ENCODE measurements at regions of chr7 and their contacts with region 1.

Region 1: DNA sequence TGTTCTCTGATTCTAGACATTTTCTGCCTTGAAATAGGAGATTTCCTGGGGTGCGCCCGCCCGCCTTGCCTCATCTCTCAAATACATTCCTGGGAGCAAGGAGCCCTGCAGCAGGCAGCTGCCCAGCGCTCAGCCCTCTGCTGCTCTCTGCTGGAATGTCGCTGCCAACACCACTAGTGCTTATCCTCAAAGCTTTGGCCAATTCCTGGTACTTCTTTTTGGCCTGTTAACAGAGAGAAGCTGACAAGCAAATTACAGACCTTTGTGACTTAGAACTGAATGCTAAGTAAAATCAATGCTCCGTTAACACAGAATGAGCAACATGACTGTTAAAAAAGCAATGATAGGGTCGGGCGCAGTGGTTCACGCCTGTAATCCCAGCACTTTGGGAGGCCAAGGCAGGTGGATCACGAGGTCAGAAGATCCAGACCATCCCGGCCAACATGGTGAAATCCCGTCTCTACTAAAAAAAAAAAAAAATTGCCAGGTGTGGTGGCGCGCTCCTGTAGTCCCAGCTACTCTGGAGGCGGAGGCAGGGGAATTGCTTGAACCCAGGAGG is 41.9 kb upstream of the SYPL1 start:
- DNase-seq: peak; percentile 79
- ATAC-seq: peak; percentile 98
- H3K4me3 Mint-ChIP-seq: no peak overlapping the region
- H3K27ac Mint-ChIP-seq: no peak overlapping the region
- H3K4me1 Mint-ChIP-seq: peaks cover 5% of the 10 kb centered on the region
- H3K27me3 Mint-ChIP-seq: peaks cover 15% of the 10 kb centered on the region
- CTCF ChIP-seq: peak; percentile 94

Region 2: DNA sequence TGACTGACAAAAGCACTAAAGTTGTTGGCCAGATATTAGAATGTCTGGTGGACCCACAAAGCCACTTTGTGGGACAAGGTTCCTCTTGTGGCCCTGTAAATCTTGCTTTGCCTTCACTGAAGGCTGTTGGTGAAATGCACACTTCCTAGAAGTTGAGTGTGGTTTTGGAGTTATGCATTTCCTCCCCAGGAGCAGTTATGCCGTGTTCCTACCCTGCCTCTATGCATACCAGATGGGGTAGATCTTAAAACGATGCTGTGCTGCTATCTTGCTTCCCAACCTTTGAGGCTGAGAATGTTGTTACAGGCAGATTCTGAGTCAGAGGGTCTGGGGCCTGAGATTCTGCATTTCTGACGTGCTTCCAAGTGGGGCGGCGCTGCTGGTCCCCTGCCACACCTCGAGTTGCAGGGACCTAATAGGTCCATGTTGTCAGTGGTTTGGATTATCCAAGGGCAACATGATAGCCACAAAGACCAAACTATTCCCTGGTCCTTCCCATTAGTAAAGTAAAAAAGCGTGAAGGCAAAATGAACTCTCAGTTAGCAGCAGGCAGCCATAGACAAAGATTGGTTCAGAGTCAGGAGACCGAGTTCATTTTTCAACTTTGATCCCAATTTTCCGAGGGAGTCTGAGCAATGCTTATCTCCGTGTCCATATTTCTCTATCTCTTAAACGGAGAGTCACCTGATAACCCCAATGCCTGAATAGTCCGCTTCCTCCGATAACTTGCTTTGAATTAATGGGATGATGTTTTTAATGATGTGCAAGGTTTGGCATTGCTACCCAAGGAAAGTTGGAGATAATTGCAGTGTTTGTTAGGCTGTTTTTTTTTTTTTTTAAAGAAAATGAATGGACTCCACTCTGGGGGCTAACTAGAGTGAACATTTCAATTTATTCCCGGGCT is 135.2 kb before region 1 on chr7:
- CTCF ChIA-PET with region 1: no interaction called
- POLR2A ChIA-PET with region 1: no interaction called
- intact Hi-C with region 1: no loop called
- DNase-seq: no peak
- ATAC-seq: no peak
- H3K4me3 Mint-ChIP-seq: no peak overlapping the region
- H3K27ac Mint-ChIP-seq: no peak overlapping the region
- H3K4me1 Mint-ChIP-seq: peaks cover 60% of the 10 kb centered on the region
- H3K27me3 Mint-ChIP-seq: no peaks in the 10 kb centered on the region
- CTCF ChIP-seq: no peak

Region 3: DNA sequence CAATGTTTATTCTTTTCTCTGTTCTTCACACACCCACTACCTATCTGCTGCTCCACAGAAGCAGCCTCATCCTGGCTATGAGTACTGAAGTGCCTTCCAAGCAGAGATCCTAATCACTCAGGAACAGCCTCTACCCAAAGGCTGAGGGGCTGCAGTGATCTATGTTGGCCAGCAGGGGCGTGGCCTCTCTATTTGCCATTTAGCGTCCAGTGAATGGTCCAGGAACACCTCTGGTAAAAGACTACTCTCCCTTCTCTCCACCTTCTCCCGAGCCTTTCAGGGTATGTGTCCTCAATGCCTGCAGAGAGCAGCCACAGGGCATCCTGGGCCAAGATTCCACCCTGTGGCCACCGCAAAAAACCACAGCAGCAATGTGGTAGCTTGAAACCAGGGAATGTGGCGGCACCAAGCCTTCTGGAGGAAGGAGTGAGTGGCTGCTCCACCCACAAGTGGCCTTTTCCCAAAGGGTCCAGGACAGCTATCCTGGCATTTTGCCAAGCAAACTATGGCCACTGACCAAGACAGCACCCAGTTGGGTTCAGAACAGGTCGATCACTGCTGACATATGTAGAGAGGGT is 112.7 kb before region 1 on chr7:
- CTCF ChIA-PET with region 1: interaction called, 34 read pairs
- POLR2A ChIA-PET with region 1: no interaction called
- intact Hi-C with region 1: no loop called
- DNase-seq: peak; percentile 50
- ATAC-seq: peak; percentile 59
- H3K4me3 Mint-ChIP-seq: no peak overlapping the region
- H3K27ac Mint-ChIP-seq: no peak overlapping the region
- H3K4me1 Mint-ChIP-seq: peaks cover 28% of the 10 kb centered on the region
- H3K27me3 Mint-ChIP-seq: no peaks in the 10 kb centered on the region
- CTCF ChIP-seq: peak; percentile 82

Region 4: GRCh38 chr7:106056513-106057203 is 97.3 kb before region 1 on chr7:
- CTCF ChIA-PET with region 1: interaction called, 195 read pairs
- POLR2A ChIA-PET with region 1: interaction called, 7 read pairs
- intact Hi-C with region 1: loop called (anchors 1 kb)
- DNase-seq: peak; percentile 83
- ATAC-seq: peak; percentile 97
- H3K4me3 Mint-ChIP-seq: no peak overlapping the region
- H3K27ac Mint-ChIP-seq: peak overlapping the region; percentile 34
- H3K4me1 Mint-ChIP-seq: peaks cover 25% of the 10 kb centered on the region
- H3K27me3 Mint-ChIP-seq: no peaks in the 10 kb centered on the region
- CTCF ChIP-seq: peak; percentile 87

Region 5: GRCh38 chr7:106086062-106086461 is 67.9 kb before region 1 on chr7:
- CTCF ChIA-PET with region 1: interaction called, 11 read pairs
- POLR2A ChIA-PET with region 1: no interaction called
- intact Hi-C with region 1: no loop called
- DNase-seq: peak; percentile 52
- ATAC-seq: peak; percentile 87
- H3K4me3 Mint-ChIP-seq: no peak overlapping the region
- H3K27ac Mint-ChIP-seq: no peak overlapping the region
- H3K4me1 Mint-ChIP-seq: peaks cover 22% of the 10 kb centered on the region
- H3K27me3 Mint-ChIP-seq: no peaks in the 10 kb centered on the region
- CTCF ChIP-seq: no peak

Region 6: DNA sequence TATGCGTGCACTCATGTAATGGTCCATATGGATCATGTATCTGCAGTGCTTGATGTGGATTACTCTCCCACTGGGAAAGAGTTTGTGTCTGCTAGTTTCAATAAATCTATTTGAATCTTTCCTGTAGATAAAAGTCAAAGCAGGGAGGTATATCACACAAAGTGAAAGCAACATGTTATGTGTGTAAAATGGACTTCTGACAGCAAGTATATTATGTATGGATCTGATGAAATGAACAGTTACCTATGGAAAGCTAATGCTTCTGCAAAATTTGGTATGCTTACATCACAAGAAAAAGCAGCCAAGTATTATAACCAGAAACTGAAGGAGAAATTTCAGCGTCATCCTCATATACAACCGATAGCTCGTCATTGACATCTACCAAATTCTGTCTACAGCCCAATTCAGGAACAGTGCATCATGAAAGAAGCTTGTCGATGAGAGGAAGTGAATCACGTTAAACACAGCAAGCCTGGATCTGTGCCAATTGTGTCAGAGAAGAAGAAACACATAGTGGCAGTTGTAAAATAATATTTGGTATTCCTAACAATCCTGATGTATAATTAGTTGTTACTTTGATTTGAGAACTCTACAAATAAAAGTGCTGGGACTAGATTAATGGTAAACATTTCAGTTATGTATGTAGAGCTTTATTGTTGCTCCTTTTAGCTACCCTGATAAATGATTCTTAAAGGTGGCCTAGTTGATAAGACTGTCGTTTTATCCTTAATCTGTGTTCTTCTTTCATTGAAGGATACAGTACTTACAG is 27.6 kb before region 1 on chr7:
- CTCF ChIA-PET with region 1: interaction called, 15 read pairs
- POLR2A ChIA-PET with region 1: no interaction called
- intact Hi-C with region 1: no loop called
- DNase-seq: peak; percentile 74
- ATAC-seq: peak; percentile 79
- H3K4me3 Mint-ChIP-seq: peak overlapping the region; percentile 56
- H3K27ac Mint-ChIP-seq: peak overlapping the region; percentile 17
- H3K4me1 Mint-ChIP-seq: peaks cover 14% of the 10 kb centered on the region
- H3K27me3 Mint-ChIP-seq: no peaks in the 10 kb centered on the region
- CTCF ChIP-seq: no peak

Region 7: DNA sequence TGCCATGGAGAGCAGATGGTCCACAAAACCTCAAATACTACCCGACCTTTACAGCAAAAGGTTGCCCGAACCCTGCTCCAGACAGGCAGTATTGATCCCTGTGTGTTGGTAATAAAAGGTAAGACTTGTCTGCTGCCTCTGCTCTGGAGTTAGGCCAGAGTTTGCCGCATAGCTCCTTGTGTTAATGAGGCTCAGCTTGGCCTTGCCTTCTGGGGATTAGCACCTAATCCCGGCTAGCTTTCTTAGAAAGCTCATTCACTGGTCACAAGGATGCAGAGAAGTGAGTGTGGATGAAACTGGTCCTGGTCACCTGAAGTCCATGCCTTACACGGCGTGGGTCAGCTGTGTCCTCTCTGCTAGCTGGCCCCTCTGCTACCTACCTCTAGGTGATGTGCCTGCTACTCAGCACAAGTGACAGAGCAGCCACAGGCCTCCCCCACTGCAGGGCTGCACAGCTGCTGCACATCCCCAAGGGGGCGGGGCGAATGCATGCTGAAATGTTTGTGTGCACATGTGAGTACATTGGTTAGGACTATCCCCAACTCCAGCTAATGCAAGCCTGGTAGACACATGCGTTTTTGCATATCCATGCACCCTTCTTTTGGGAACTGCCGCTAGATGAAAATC is 10.1 kb before region 1 on chr7:
- CTCF ChIA-PET with region 1: interaction called, 37 read pairs
- POLR2A ChIA-PET with region 1: no interaction called
- intact Hi-C with region 1: no loop called
- DNase-seq: peak; percentile 20
- ATAC-seq: no peak
- H3K4me3 Mint-ChIP-seq: no peak overlapping the region
- H3K27ac Mint-ChIP-seq: no peak overlapping the region
- H3K4me1 Mint-ChIP-seq: no peaks in the 10 kb centered on the region
- H3K27me3 Mint-ChIP-seq: peaks cover 1% of the 10 kb centered on the region
- CTCF ChIP-seq: no peak

Region 8: DNA sequence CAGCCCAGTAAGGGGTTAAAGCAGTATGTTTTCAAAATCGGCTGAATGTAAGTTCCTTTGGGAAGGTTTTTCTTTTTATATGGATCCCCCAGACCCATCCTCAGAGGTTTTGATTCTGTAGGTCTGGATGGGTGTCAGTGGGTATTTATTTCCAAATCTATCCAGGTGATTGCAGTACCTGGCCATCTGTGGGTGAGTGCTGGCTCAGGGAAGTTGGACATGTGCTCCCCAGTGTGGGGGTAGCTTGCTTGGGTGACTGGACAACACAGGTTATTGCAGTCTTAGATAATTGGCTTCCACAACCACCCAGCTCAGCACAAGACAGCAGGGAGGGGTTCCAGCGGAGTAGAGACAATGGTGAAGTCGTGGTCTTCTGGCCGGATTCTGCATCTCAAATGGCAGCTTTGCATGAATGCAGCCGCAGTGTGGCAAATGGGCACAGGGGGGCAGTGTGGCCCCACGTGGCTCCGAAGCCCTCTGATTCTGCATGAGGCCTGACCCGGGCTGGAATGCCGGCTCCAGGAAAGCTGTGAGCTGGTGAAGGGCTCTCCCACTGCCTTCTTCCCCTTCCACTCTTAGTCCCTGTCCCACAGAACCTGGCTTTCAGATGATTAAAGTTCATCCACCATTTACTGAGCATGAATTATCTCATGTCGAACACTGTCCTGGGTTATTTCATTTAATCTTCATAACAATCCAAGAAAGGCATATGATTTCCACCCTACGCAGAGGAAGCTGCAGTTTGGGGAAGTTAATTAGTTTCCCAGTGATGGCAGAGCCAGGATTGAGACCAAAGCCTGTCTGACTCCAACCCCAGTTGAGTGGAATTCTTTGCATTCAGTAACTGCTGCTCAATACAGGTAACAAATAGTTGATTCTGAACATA is 22.7 kb after region 1 on chr7:
- CTCF ChIA-PET with region 1: interaction called, 15 read pairs
- POLR2A ChIA-PET with region 1: interaction called, 6 read pairs
- intact Hi-C with region 1: no loop called
- DNase-seq: peak; percentile 82
- ATAC-seq: peak; percentile 95
- H3K4me3 Mint-ChIP-seq: no peak overlapping the region
- H3K27ac Mint-ChIP-seq: no peak overlapping the region
- H3K4me1 Mint-ChIP-seq: peaks cover 7% of the 10 kb centered on the region
- H3K27me3 Mint-ChIP-seq: peaks cover 13% of the 10 kb centered on the region
- CTCF ChIP-seq: peak; percentile 94

Region 9: GRCh38 chr7:106225856-106226255 is 71.9 kb after region 1 on chr7:
- CTCF ChIA-PET with region 1: no interaction called
- POLR2A ChIA-PET with region 1: no interaction called
- intact Hi-C with region 1: no loop called
- DNase-seq: no peak
- ATAC-seq: no peak
- H3K4me3 Mint-ChIP-seq: no peak overlapping the region
- H3K27ac Mint-ChIP-seq: no peak overlapping the region
- H3K4me1 Mint-ChIP-seq: peaks cover 5% of the 10 kb centered on the region
- H3K27me3 Mint-ChIP-seq: peaks cover 26% of the 10 kb centered on the region
- CTCF ChIP-seq: no peak